ENCODE measurements at regions of chr1 and their contacts with region 1.

Region 1: GRCh38 chr1:206050655-206051235 is 2.2 kb upstream of the RHEX start:
- DNase-seq: peak; percentile 98
- H3K4me3 ChIP-seq: peak overlapping the region; percentile 55
- H3K27ac ChIP-seq: peak overlapping the region; percentile 98
- H3K4me1 ChIP-seq: peaks cover 74% of the 10 kb centered on the region
- CTCF ChIP-seq: peak; percentile 71

Region 2: DNA sequence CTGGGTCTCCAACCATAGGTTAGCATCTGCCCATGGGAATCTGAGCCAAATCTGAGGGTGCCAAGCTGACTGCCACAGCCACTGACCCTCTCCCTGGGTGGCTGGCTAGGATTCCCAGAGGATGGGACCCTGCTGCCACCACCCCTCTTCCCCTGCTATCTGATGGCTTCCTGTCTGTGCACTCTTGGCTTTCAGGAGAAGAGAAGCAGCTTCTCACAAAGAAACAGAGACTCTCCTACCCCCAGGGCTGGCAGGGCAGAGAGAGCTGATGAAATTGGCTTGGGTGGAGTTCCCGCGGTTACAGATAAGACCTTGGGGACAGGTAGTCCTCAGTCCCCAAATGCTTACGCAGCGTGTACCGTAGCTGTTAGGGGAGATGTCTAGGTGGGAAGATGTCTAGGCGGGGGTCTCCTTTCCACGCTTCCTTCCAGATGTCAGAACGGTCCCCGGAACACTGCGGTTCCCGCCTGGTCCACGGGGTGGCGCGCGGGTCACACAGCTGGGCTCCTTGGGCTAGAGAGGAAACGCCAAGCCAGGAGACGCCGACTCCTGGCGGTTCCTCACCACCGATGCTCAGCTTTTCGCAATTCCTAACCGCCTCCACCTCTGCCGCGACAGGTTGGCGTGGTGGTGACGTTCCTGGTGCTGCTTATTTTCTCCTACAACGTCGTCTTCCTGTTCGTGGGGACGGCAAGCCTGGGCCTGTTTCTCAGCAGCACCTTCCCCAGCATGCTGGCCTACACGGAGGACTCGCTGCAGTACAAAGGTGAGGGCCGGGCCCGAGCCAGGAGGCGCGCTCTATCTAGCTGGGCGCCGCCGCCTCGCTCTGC is 459.0 kb before region 1 on chr1:
- CTCF ChIA-PET with region 1: no interaction called
- POLR2A ChIA-PET with region 1: no interaction called
- intact Hi-C with region 1: loop called (anchors 5 kb)
- DNase-seq: peak; percentile 88
- H3K4me3 ChIP-seq: peak overlapping the region; percentile 66
- H3K27ac ChIP-seq: peak overlapping the region; percentile 93
- H3K4me1 ChIP-seq: peaks cover 65% of the 10 kb centered on the region
- CTCF ChIP-seq: peak; percentile 96

Region 3: GRCh38 chr1:206012086-206012859 is 38.5 kb before region 1 on chr1:
- CTCF ChIA-PET with region 1: no interaction called
- POLR2A ChIA-PET with region 1: interaction called, 3 read pairs
- intact Hi-C with region 1: loop called (anchors 1 kb)
- DNase-seq: peak; percentile 93
- H3K4me3 ChIP-seq: peak overlapping the region; percentile 21
- H3K27ac ChIP-seq: peak overlapping the region; percentile 37
- H3K4me1 ChIP-seq: peaks cover 19% of the 10 kb centered on the region
- CTCF ChIP-seq: 0 out of 2 replicates have a peak, but pooled peaks have one; percentile 18

Region 4: DNA sequence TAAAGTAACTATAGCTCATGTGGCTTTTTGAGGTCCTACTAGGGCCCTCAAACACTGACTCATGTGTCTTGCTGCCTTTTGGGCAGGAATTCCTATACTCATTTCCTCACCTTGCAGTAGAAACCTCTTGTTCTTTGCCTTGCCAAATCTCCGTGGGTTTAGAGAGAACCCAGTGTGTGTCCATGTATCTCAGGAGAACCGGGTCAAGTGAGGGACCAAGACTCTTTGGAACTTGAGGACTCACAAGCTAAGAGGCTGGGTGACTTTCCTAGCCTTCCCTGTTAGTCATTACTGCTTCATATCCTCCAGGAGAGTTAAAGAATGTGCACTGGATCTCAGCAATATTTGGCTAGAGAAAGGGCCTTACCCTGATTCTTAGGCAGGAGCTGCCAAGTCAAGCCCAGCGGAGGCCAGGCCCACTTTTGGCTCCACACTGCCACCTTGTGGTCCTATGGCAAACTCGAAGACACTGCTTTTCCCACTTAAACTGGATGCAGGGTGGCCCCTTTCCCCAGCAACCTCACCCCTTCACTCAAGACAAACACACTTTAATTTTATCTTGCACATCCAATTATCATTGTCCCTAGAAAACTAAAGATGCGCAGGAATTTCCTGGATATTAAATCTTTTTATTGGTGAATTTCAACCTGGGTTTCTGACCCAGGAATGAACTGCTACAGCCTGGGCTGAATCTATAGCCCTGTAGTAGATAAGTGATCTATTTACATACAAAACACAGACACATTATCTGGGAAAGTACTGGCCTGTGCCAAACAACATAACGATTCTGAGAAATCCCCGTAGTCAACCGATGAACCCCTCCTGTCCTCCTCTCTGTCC is 55.8 kb after region 1 on chr1:
- CTCF ChIA-PET with region 1: no interaction called
- POLR2A ChIA-PET with region 1: interaction called, 4 read pairs
- intact Hi-C with region 1: loop called (anchors 1 kb)
- DNase-seq: peak; percentile 85
- H3K4me3 ChIP-seq: no peak overlapping the region
- H3K27ac ChIP-seq: no peak overlapping the region
- H3K4me1 ChIP-seq: peaks cover 6% of the 10 kb centered on the region
- CTCF ChIP-seq: peak; percentile 97

Region 5: DNA sequence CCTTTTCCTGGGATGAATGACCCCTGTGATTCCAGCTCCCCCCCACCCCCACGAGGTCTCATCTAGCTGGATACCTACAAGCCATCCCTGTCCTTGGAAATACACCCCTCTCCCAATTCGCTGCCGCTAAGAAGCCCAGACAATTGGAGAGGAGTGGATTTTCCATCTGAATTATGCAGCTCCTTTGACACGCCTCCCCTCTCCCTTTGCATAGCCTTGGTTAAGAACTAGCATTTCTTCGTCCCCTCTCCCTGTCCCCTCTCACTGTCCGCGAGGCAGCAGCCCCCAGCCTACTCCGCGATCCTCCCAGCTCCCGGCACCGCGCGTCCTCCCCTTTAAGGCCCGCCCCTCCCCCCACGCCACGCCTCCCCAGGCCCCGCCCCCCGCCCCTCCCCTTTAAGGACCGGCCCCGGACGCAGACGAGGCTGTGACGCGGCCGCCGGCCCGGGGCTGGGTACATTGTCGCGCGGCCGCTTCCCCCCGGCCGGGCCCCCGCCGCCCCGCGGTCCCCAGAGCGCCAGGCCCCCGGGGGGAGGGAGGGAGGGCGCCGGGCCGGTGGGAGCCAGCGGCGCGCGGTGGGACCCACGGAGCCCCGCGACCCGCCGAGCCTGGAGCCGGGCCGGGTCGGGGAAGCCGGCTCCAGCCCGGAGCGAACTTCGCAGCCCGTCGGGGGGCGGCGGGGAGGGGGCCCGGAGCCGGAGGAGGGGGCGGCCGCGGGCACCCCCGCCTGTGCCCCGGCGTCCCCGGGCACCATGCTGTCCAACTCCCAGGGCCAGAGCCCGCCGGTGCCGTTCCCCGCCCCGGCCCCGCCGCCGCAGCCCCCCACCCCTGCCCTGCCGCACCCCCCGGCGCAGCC is 634.0 kb after region 1 on chr1 and contains the start of gene MAPKAPK2:
- CTCF ChIA-PET with region 1: no interaction called
- POLR2A ChIA-PET with region 1: no interaction called
- intact Hi-C with region 1: loop called (anchors 5 kb)
- DNase-seq: peak; percentile 87
- H3K4me3 ChIP-seq: peak within 1 kb of the TSS; percentile 82
- H3K27ac ChIP-seq: no peak within 1 kb of the TSS
- H3K4me1 ChIP-seq: peaks cover 66% of the 10 kb centered on the region
- CTCF ChIP-seq: no peak
- total RNA-seq, gene MAPKAPK2: 14.5 and 16.3 TPM in 2 replicates

Measured in OCI-LY7 (cell line).